ENCODE measurements at regions of chr2 and their contacts with region 1.

Region 1: DNA sequence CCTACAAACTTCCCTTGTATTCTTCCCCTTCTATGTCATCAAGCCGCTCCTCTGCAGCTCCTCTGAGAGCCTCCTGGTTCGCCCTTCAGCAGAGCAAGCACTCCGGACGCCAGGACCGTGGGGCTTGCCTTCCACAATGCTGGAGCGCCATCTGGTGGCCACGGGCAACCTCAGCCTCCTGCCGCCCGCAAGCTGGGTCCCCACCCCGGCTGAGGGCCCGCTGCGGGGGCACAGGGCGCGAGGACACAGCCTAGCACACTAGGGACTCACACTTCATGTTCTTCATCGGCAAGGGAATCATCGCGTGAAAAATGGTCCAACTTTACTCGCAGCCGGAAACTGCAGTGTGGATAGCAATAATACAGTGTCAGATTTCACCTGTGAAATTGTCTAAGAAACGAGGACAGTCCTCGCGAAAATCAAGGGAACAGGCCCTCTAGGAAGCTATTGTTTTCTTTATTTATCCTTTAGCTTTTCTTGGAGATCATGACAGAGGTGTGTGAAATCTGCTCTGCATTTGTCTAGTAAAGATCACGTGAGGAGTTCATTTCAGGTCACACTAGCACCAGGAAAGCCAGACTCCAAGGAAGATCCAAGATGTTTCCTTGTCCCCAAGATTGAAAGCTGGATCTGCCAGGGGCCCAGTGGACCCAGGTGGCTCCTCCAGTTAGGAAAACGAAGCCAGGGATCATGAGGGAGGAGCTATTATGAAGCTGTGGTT is 5.8 kb downstream of the PRLH start:
- H3K4me3 Mint-ChIP-seq: no peak overlapping the region
- H3K27ac Mint-ChIP-seq: no peak overlapping the region
- H3K4me1 Mint-ChIP-seq: peaks cover 8% of the 10 kb centered on the region
- H3K27me3 Mint-ChIP-seq: peaks cover 6% of the 10 kb centered on the region

Region 2: GRCh38 chr2:237408335-237409000 is 163.7 kb before region 1 on chr2:
- intact Hi-C with region 1: no loop called
- H3K4me3 Mint-ChIP-seq: no peak overlapping the region
- H3K27ac Mint-ChIP-seq: no peak overlapping the region
- H3K4me1 Mint-ChIP-seq: no peaks in the 10 kb centered on the region
- H3K27me3 Mint-ChIP-seq: peaks cover 22% of the 10 kb centered on the region

Region 3: DNA sequence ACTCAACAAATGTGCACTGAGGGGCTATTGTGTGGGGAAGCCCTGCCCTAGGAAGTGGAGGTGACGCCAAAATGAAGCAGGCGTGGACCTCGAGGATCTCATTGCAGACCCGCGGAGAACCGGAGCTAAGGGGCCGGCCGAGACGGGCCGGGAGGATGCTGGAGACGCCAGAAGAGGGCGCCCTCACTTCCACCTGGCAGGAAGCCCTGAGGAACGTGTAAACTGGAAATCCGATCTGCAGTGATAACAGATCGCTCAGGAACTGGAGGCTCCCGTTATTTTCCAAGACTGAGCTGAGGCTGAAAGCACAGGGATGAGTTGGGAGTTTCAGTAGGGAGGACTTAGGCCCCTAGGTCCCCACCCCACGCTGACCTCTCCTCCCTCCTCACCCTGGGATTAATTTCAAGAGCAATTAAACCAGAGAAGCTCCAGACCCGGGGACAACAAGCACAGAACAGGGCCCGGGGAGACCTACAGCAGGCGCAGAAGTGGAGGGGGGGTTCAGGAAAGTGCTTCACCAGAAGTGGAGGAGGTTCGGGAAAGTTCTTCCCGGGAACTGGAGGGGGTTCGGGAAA is 150.6 kb before region 1 on chr2:
- intact Hi-C with region 1: loop called (anchors 10 kb)
- H3K4me3 Mint-ChIP-seq: no peak overlapping the region
- H3K27ac Mint-ChIP-seq: no peak overlapping the region
- H3K4me1 Mint-ChIP-seq: peaks cover 6% of the 10 kb centered on the region
- H3K27me3 Mint-ChIP-seq: peaks cover 35% of the 10 kb centered on the region

Region 4: DNA sequence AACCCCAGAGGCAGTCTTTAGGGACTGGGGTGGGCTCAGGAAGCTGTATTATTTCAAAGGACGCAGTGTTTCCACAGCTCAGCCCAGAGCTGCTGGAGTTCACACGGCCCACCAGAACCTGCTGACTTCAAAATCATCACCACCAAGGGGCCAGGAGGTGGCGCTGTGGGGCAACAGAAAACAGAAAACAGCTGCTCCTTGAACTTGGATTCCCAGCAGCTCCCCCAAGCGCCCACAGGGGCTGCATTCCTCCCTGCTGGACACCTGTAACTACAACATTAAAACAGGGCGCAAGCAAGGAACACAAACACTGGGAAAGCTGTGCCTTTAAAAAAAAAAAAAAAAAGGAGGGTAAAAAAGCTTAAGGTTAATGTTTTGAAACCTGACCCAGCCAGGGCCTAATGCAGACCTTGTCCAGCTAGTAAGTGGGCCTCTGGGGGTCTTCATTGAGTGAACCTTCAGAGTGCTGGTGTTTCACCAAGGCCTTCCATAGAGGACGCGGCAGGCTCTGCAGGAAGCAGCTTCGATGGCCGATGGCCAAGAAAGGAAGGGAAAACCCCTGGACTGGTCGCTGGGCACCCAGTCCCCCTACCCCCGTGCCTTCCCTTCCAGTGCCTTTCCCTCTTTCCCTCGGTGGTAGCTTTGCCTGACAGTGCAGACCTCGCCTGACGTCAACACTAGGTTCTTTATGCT is 59.3 kb before region 1 on chr2:
- intact Hi-C with region 1: loop called (anchors 1 kb)
- H3K4me3 Mint-ChIP-seq: no peak overlapping the region
- H3K27ac Mint-ChIP-seq: no peak overlapping the region
- H3K4me1 Mint-ChIP-seq: no peaks in the 10 kb centered on the region
- H3K27me3 Mint-ChIP-seq: peaks cover 14% of the 10 kb centered on the region

Region 5: GRCh38 chr2:237590272-237591140 is 18.3 kb after region 1 on chr2 and contains the start of gene RAB17:
- intact Hi-C with region 1: no loop called
- H3K4me3 Mint-ChIP-seq: peak within 1 kb of the TSS; percentile 30
- H3K27ac Mint-ChIP-seq: peak within 1 kb of the TSS; percentile 44
- H3K4me1 Mint-ChIP-seq: peaks cover 20% of the 10 kb centered on the region
- H3K27me3 Mint-ChIP-seq: peaks cover 8% of the 10 kb centered on the region